AG04449 (cell line): ENCODE measurements at regions of chr15 and their contacts with region 1.

Region 1: GRCh38 chr15:74641151-74641550 is 25.5 kb downstream of the CLK3 start:
- DNase-seq: no peak
- H3K4me3 ChIP-seq: no peak overlapping the region
- CTCF ChIP-seq: no peak

Region 2: GRCh38 chr15:74449643-74450205 is 191.4 kb before region 1 on chr15:
- CTCF ChIA-PET with region 1: no interaction called
- POLR2A ChIA-PET with region 1: no interaction called
- DNase-seq: no peak
- H3K4me3 ChIP-seq: no peak overlapping the region
- CTCF ChIP-seq: no peak

Region 3: GRCh38 chr15:74653426-74654123 is 12.4 kb after region 1 on chr15:
- CTCF ChIA-PET with region 1: interaction called, 246 read pairs
- POLR2A ChIA-PET with region 1: no interaction called
- DNase-seq: no peak
- H3K4me3 ChIP-seq: no peak overlapping the region
- CTCF ChIP-seq: no peak